Caco-2 (cell line): ENCODE measurements at regions of chr11 and their contacts with region 1.

Region 1: DNA sequence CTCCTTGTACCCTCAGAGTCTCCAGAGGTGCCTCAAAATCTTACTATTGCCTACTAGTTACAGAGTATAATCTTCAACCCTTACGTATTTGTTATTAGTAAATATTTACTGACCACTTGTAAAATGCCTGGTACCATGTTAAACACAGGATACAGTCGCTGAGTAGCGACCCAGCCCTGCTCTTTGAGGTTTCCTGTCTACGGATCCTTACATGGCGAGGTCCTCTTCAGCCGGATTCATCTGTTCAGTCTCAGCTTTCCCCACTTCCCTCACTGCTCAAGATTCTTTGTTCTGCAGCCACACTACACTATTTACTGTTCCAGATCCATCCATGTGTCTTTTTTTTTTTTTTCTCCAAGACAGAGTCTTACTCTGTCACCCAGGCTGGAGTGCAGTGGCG is 13.2 kb upstream of the TTC36 start:
- DNase-seq: no peak
- H3K4me3 ChIP-seq: no peak overlapping the region
- H3K4me3 Mint-ChIP-seq: no peak overlapping the region
- H3K27ac Mint-ChIP-seq: no peak overlapping the region
- H3K4me1 ChIP-seq: peaks cover 30% of the 10 kb centered on the region
- H3K4me1 Mint-ChIP-seq: peaks cover 28% of the 10 kb centered on the region
- H3K27me3 ChIP-seq: no peaks in the 10 kb centered on the region
- H3K27me3 Mint-ChIP-seq: no peaks in the 10 kb centered on the region
- CTCF ChIP-seq: no peak

Region 2: DNA sequence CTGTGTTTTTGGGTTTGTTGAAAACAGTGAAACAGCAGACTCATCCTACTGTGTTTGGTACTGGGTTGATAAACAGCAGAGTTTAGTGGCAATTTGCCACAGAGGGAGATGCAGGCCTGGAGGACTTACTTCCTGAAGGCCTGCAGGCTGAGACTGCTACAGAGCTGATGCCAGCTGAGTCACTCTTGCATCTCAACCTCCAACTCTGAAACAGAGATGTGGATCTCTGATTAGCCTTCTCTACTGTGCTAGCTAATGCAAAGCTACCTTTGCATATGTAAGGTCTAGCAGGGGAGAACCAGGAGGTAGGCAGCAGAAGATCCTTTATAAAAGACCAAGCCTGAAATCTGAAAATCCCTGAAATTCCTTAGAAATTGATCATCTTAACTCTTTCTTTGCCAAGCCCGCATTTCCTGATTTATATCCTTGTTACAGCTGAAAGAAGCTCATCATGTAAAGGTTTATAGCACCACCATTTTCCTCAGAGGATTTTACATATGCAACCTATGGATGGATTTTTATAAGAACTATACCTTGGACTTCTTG is 98.3 kb before region 1 on chr11:
- CTCF ChIA-PET with region 1: no interaction called
- POLR2A ChIA-PET with region 1: no interaction called
- intact Hi-C with region 1: no loop called
- DNase-seq: no peak
- H3K4me3 ChIP-seq: no peak overlapping the region
- H3K4me3 Mint-ChIP-seq: no peak overlapping the region
- H3K27ac Mint-ChIP-seq: no peak overlapping the region
- H3K4me1 ChIP-seq: peaks cover 17% of the 10 kb centered on the region
- H3K4me1 Mint-ChIP-seq: peaks cover 7% of the 10 kb centered on the region
- H3K27me3 ChIP-seq: no peaks in the 10 kb centered on the region
- H3K27me3 Mint-ChIP-seq: no peaks in the 10 kb centered on the region
- CTCF ChIP-seq: no peak

Region 3: GRCh38 chr11:118565051-118565450 is 50.9 kb after region 1 on chr11:
- CTCF ChIA-PET with region 1: no interaction called
- POLR2A ChIA-PET with region 1: no interaction called
- intact Hi-C with region 1: loop called (anchors 10 kb)
- DNase-seq: no peak
- H3K4me3 ChIP-seq: 0 out of 2 replicates have a peak overlapping the region, but pooled peaks have one; percentile 6
- H3K4me3 Mint-ChIP-seq: peak overlapping the region; percentile 95
- H3K27ac Mint-ChIP-seq: no peak overlapping the region
- H3K4me1 ChIP-seq: no peaks in the 10 kb centered on the region
- H3K4me1 Mint-ChIP-seq: peaks cover 9% of the 10 kb centered on the region
- H3K27me3 ChIP-seq: no peaks in the 10 kb centered on the region
- H3K27me3 Mint-ChIP-seq: no peaks in the 10 kb centered on the region
- CTCF ChIP-seq: no peak